ENCODE measurements at regions of chr3 and their contacts with region 1.

Region 1: GRCh38 chr3:62229920-62230319 is 143.4 kb downstream of the FEZF2 start:
- DNase-seq: no peak
- H3K4me3 ChIP-seq: no peak overlapping the region
- H3K27ac ChIP-seq: no peak overlapping the region
- H3K4me1 ChIP-seq: peaks cover 0 to 3% (median 0%) of the 10 kb centered on the region in 4 experiments; a peak in 3 of 7 replicates
- H3K27me3 ChIP-seq: no peaks in the 10 kb centered on the region
- CTCF ChIP-seq: peak in 2 of 3 experiments; percentile 33 to 59; a peak in 2 of 4 replicates
- EP300 ChIP-seq: no peak
- POLR2A ChIP-seq: no peak
- RAD21 ChIP-seq: peak in 1 of 2 experiments; percentile 39; a peak in 3 of 4 replicates

Region 2: DNA sequence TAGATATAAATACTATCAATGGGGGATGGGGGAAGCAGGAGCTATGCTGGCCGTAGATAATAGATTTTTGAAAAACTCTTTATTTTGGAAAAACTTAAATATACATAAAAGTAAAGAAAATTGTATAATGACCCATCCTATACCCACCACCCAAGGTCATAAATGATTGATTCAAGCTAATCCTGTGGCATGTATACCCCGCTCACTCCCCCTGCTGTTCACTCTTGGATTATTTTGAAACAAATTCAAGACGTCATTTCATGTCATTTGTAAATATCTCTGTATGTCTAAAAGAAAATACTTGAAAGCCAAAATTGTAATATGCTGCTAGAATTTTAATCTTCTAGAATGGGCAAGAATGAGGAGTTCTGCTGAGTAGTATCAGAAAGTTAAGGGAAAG is 98.3 kb before region 1 on chr3:
- CTCF ChIA-PET with region 1: no interaction called
- POLR2A ChIA-PET with region 1: no interaction called
- DNase-seq: no peak
- H3K4me3 ChIP-seq: no peak overlapping the region
- H3K27ac ChIP-seq: no peak overlapping the region
- H3K4me1 ChIP-seq: peaks cover 0 to 3% (median 0%) of the 10 kb centered on the region in 4 experiments; a peak in 1 of 7 replicates
- H3K27me3 ChIP-seq: no peaks in the 10 kb centered on the region
- CTCF ChIP-seq: peak in 2 of 3 experiments; percentile 27 to 39; a peak in 2 of 4 replicates
- EP300 ChIP-seq: no peak
- POLR2A ChIP-seq: no peak
- RAD21 ChIP-seq: peak; percentile 57 to 61

Region 3: GRCh38 chr3:62201438-62202035 is 28.4 kb before region 1 on chr3:
- CTCF ChIA-PET with region 1: interaction called, 10 read pairs
- POLR2A ChIA-PET with region 1: interaction called, 4 read pairs
- DNase-seq: no peak
- H3K4me3 ChIP-seq: no peak overlapping the region
- H3K27ac ChIP-seq: no peak overlapping the region
- H3K4me1 ChIP-seq: no peaks in the 10 kb centered on the region
- H3K27me3 ChIP-seq: no peaks in the 10 kb centered on the region
- CTCF ChIP-seq: peak in 2 of 3 experiments; percentile 39 to 53; a peak in 2 of 4 replicates
- EP300 ChIP-seq: no peak
- POLR2A ChIP-seq: no peak
- RAD21 ChIP-seq: peak; percentile 64 to 68

Region 4: GRCh38 chr3:62261121-62261520 is 31.2 kb after region 1 on chr3:
- CTCF ChIA-PET with region 1: interaction called, 12 read pairs
- POLR2A ChIA-PET with region 1: no interaction called
- DNase-seq: no peak
- H3K4me3 ChIP-seq: no peak overlapping the region
- H3K27ac ChIP-seq: no peak overlapping the region
- H3K4me1 ChIP-seq: no peaks in the 10 kb centered on the region
- H3K27me3 ChIP-seq: no peaks in the 10 kb centered on the region
- CTCF ChIP-seq: no peak
- EP300 ChIP-seq: no peak
- POLR2A ChIP-seq: no peak
- RAD21 ChIP-seq: no peak

Region 5: GRCh38 chr3:62405135-62405534 is 175.2 kb after region 1 on chr3:
- CTCF ChIA-PET with region 1: no interaction called
- POLR2A ChIA-PET with region 1: no interaction called
- DNase-seq: no peak
- H3K4me3 ChIP-seq: no peak overlapping the region
- H3K27ac ChIP-seq: no peak overlapping the region
- H3K4me1 ChIP-seq: no peaks in the 10 kb centered on the region
- H3K27me3 ChIP-seq: peaks cover 0 to 1% (median 0%) of the 10 kb centered on the region in 4 experiments; a peak in 1 of 7 replicates
- CTCF ChIP-seq: no peak
- EP300 ChIP-seq: no peak
- POLR2A ChIP-seq: no peak
- RAD21 ChIP-seq: no peak

Measured in H1 (cell line).